ENCODE measurements at regions of chr12 and their contacts with region 1.

Region 1: GRCh38 chr12:47397664-47398281 is 308.1 kb downstream of the RPAP3 start:
- DNase-seq: peak; percentile 64
- H3K4me3 Mint-ChIP-seq: peak overlapping the region; percentile 45
- H3K27ac Mint-ChIP-seq: peak overlapping the region; percentile 100
- H3K4me1 Mint-ChIP-seq: peaks cover 89% of the 10 kb centered on the region
- H3K27me3 Mint-ChIP-seq: no peaks in the 10 kb centered on the region

Region 2: DNA sequence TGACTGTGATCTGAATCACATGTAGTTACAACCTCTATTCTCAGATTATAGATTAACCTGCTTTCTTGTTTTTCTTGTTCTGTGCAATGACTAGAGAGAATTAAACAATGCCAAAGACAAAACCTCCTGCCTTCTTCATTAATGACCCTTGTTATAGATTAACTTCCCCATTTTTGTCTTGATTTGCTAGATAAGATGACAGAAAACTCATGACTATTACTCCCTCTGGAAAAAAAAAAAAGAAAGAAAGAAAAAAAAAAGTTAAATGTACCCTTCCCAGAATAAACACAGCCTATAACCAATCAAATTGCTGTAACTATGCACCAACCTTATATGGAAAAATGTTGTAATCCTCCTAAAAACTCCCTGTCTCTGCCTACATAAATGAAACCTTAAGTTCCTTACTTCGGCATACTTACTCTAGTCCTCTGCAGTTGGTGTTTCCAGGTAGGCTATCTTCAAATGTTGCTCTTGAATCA is 359.5 kb before region 1 on chr12:
- CTCF ChIA-PET with region 1: interaction called, 86 read pairs
- POLR2A ChIA-PET with region 1: no interaction called
- intact Hi-C with region 1: no loop called
- DNase-seq: no peak
- H3K4me3 Mint-ChIP-seq: no peak overlapping the region
- H3K27ac Mint-ChIP-seq: no peak overlapping the region
- H3K4me1 Mint-ChIP-seq: peaks cover 26% of the 10 kb centered on the region
- H3K27me3 Mint-ChIP-seq: peaks cover 1% of the 10 kb centered on the region

Region 3: DNA sequence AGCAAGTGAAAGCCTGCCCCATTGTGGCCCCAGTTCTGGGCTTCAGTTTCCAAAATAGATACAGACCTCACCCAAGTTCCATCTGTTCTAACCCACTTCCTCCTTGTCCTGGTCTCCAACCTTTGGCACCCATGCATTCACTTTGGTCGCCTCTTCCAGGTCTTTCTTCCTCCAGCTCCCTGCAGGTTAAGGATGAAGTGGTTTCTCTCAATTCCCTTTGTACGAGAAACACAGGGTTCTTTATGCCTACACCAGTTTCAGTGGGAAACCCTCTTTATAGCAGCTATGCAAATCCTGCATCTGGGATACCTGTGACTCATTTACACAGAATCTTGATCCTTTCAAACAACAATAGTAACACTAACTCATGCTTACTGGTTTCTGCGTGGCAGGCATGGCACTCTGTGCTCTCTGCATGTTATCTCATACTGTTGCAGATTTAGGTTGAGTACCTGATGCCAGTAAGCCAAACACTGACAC is 207.5 kb before region 1 on chr12:
- CTCF ChIA-PET with region 1: interaction called, 8 read pairs
- POLR2A ChIA-PET with region 1: no interaction called
- intact Hi-C with region 1: loop called (anchors 1 kb)
- DNase-seq: peak; percentile 63
- H3K4me3 Mint-ChIP-seq: peak overlapping the region; percentile 17
- H3K27ac Mint-ChIP-seq: peak overlapping the region; percentile 80
- H3K4me1 Mint-ChIP-seq: peaks cover 82% of the 10 kb centered on the region
- H3K27me3 Mint-ChIP-seq: no peaks in the 10 kb centered on the region

Region 4: GRCh38 chr12:47302111-47302671 is 95.6 kb before region 1 on chr12:
- CTCF ChIA-PET with region 1: interaction called, 30 read pairs
- POLR2A ChIA-PET with region 1: interaction called, 4 read pairs
- intact Hi-C with region 1: loop called (anchors 1 kb)
- DNase-seq: peak; percentile 29
- H3K4me3 Mint-ChIP-seq: peak overlapping the region; percentile 56
- H3K27ac Mint-ChIP-seq: peak overlapping the region; percentile 91
- H3K4me1 Mint-ChIP-seq: peaks cover 75% of the 10 kb centered on the region
- H3K27me3 Mint-ChIP-seq: no peaks in the 10 kb centered on the region

Region 5: DNA sequence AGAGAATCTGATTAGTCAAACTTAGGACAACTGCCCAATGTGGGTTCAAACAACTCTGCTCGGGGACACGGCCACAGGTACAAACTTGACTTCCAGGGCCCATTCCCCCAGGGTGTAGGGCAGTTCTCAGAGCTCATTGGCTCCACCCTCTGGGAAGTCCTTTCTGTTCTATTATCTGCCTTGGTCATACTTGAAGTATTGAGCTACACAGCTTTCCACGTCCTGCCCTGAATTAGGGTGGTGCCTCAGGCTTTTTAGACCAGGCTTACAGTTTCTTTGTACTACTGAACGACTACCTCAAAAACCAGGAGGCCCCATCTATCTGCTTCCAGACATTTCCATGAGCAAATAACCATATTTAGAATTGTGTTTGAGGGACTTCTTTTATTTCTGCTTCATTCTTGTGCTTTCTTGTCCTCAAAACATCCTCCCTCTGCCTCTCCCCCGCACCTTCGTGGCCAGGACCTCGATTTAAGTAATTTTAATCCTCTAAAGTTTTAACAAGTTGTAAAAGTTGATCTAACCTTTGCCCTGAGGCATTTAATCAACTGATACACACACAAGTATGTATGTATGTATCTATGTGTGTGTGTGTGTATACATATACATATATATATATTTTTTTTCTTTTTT is 36.3 kb before region 1 on chr12:
- CTCF ChIA-PET with region 1: interaction called, 56 read pairs
- POLR2A ChIA-PET with region 1: interaction called, 36 read pairs
- intact Hi-C with region 1: loop called (anchors 1 kb)
- DNase-seq: peak; percentile 73
- H3K4me3 Mint-ChIP-seq: peak overlapping the region; percentile 66
- H3K27ac Mint-ChIP-seq: peak overlapping the region; percentile 99
- H3K4me1 Mint-ChIP-seq: peaks cover 60% of the 10 kb centered on the region
- H3K27me3 Mint-ChIP-seq: no peaks in the 10 kb centered on the region

Region 6: GRCh38 chr12:47617476-47617875 is 219.7 kb after region 1 on chr12:
- CTCF ChIA-PET with region 1: no interaction called
- POLR2A ChIA-PET with region 1: no interaction called
- intact Hi-C with region 1: no loop called
- DNase-seq: no peak
- H3K4me3 Mint-ChIP-seq: no peak overlapping the region
- H3K27ac Mint-ChIP-seq: no peak overlapping the region
- H3K4me1 Mint-ChIP-seq: no peaks in the 10 kb centered on the region
- H3K27me3 Mint-ChIP-seq: no peaks in the 10 kb centered on the region

Region 7: DNA sequence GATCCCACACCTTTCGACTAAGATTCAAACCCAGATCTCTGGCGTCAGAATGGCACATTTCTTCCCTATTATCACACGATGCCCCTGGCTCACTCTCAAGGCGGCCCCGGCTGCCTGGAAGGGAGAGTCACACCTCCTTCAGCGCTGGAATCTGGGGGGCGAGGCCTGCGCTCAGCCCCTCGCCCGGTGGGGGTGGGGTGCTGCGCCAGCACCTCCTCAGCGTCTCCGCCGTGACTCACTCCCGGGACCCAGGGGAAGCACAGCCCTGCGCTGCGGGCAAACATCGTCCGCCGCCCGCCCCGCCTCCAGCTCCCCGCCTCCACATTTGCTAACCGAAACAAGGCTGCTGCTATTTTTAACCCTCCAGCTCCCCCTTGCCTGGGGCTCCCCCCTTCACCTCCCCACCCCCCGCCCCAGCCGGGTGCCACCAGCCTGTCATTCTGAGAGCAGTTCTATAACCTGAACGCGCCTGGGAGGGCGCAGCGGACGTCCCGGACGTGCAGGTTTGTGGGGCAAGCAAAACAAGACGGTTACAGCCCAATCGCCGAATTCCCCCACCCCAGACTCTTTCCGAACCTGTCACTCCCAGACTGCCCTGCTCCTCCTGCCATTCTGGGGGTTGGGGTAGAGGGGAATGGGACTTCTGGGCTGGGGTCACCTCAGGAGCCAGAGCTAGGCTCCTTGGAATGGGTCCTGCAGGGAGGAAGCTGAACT is 415.2 kb after region 1 on chr12:
- CTCF ChIA-PET with region 1: no interaction called
- POLR2A ChIA-PET with region 1: no interaction called
- intact Hi-C with region 1: loop called (anchors 10 kb)
- DNase-seq: peak; percentile 98
- H3K4me3 Mint-ChIP-seq: peak overlapping the region; percentile 92
- H3K27ac Mint-ChIP-seq: peak overlapping the region; percentile 99
- H3K4me1 Mint-ChIP-seq: peaks cover 82% of the 10 kb centered on the region
- H3K27me3 Mint-ChIP-seq: no peaks in the 10 kb centered on the region